Brain microvascular endothelial cell (primary cell): ENCODE measurements at regions of chr5 and their contacts with region 1.

Region 1: GRCh38 chr5:88680253-88681132 is 202.5 kb downstream of the MEF2C start:
- DNase-seq: no peak
- H3K4me3 ChIP-seq: peak overlapping the region; percentile 57
- H3K27ac ChIP-seq: no peak overlapping the region
- H3K27me3 ChIP-seq: peaks cover 95% of the 10 kb centered on the region
- CTCF ChIP-seq: peak; percentile 77

Region 2: GRCh38 chr5:87780831-87781760 is 899.4 kb before region 1 on chr5:
- in situ Hi-C with region 1: loop called (anchors 10 kb)
- DNase-seq: peak; percentile 65
- H3K4me3 ChIP-seq: no peak overlapping the region
- H3K27ac ChIP-seq: no peak overlapping the region
- H3K27me3 ChIP-seq: peaks cover 1% of the 10 kb centered on the region
- CTCF ChIP-seq: peak; percentile 92

Region 3: DNA sequence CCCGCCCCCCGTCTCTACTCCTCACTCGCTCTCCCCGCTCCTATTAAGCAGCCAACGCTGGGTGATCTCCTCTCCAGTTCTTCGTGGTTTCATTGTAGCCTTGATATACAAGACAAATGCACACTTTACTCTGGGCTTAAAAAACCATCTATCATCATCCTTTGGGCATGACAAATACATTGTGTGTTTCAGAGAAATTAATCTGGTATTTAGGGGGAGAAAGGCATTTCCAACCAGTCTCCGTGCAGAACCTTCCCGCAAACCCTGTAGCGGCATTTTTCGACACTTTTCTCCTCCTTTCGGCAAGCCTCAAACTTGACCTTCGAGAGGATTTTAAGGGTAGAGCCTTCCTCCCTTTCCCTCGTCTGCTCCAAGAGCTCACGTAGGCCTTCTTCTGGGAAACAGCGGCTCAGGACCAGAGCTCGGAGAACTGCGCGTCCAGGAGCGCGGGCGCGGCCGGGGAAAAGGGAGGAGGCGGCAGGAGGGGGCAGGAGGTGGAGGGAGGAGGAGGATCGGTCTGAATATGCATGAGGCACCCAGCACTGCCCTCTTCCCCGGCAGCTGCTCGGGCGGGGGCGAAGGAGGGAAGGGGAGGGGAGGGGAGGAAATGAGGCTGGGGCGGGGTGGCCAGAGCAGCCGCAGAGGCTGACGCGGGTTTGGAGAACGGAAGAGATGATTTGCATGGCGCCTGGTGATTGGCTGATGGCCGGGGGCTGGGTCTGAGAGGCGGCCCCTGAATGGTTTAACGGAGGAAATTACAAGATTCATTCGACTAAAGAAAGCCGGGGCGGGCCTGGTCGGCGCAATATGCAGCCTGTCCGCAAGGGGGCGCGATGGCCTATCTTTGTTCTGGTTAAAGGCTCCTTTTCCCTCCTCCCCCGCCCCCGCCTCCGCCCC is 539.4 kb before region 1 on chr5:
- in situ Hi-C with region 1: loop called (anchors 10 kb)
- DNase-seq: peak; percentile 96
- H3K4me3 ChIP-seq: peak overlapping the region; percentile 58
- H3K27ac ChIP-seq: no peak overlapping the region
- H3K27me3 ChIP-seq: peaks cover 42% of the 10 kb centered on the region
- CTCF ChIP-seq: peak; percentile 77